ENCODE measurements at regions of chr20 and their contacts with region 1.

Region 1: GRCh38 chr20:32638848-32639247 is 34.9 kb downstream of the C20orf203 start:
- DNase-seq: peak; percentile 91
- H3K4me3 ChIP-seq: no peak overlapping the region
- H3K27ac ChIP-seq: no peak overlapping the region
- H3K4me1 ChIP-seq: peaks cover 13% of the 10 kb centered on the region
- H3K27me3 ChIP-seq: no peaks in the 10 kb centered on the region
- CTCF ChIP-seq: peak; percentile 39 to 73

Region 2: DNA sequence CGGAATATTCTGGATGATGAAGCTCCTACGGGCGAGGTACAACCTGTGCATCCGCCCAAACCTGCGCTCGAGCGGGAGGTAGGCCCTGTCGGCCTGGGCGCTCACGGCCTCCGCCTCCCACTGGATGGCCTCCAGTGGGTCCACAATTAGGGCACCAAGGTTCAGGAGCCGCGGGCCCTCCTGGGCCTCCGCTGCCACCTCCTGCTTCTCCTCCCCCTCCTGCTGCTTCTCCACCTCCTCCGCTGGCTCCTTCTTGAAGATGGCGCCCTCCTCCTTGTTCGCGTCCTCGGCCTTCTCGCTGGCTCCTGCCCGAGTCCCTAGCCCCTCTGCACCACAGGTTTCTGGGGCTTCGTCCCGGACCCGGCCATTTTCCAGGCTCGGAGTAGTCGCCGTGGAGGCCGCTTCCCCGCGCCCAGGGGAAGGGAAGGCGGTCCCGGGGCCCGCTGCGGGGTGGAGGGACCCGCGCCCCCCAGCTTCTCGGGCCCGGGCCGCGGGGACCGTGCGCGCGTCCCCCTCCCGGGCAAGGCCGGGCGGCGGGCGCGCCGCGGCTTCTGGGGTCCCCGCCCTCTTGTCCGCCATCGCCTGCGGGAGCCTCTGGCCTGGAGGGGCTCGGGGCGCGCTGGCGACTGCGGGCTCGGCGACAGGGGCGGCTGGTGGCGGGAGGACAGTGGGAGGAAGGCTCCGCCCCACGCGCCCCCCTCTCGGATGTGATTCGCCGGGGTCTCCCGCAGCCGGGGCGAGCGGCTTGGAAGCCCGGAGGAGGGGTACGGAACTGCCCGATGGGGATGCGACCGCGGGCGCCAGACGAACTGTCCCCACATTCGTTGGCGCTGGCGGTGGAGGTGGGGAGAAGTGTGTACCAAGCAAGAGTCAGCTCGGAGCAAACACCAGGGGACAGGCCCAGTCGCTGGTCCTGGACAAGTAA is 448.9 kb before region 1 on chr20:
- CTCF ChIA-PET with region 1: no interaction called
- dilution Hi-C with region 1: no loop called
- in situ Hi-C with region 1: no loop called
- intact Hi-C with region 1: no loop called
- DNase-seq: no peak
- H3K4me3 ChIP-seq: peak overlapping the region; percentile 21 to 48 (median 33)
- H3K27ac ChIP-seq: no peak overlapping the region
- H3K4me1 ChIP-seq: peaks cover 12% of the 10 kb centered on the region
- H3K27me3 ChIP-seq: no peaks in the 10 kb centered on the region
- CTCF ChIP-seq: no peak

Region 3: DNA sequence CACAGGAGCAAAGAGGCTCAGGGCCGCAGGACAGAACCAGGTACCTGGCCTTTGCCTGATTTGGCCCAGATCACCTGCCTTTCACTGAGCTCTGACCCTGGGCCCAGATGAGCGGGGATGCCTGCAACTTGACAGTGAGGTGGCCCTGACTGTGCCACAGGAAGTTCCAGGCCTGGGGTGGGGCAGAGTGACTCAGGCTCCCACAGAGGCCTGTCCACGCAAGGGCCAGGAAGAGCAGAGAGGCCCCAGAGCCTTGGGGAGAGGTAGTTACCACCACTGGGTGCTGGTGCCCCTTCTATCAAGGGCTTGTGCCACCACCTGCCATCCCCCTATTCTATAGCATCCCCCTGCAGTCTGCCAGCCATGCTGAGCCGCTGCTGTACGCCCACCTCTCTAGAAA is 49.6 kb before region 1 on chr20:
- CTCF ChIA-PET with region 1: interaction called, 5 read pairs
- dilution Hi-C with region 1: no loop called
- in situ Hi-C with region 1: no loop called
- intact Hi-C with region 1: loop called (anchors 2 kb)
- DNase-seq: peak; percentile 57
- H3K4me3 ChIP-seq: no peak overlapping the region
- H3K27ac ChIP-seq: no peak overlapping the region
- H3K4me1 ChIP-seq: peaks cover 16% of the 10 kb centered on the region
- H3K27me3 ChIP-seq: no peaks in the 10 kb centered on the region
- CTCF ChIP-seq: no peak

Region 4: GRCh38 chr20:32605167-32605656 is 33.6 kb before region 1 on chr20:
- CTCF ChIA-PET with region 1: no interaction called
- dilution Hi-C with region 1: no loop called
- in situ Hi-C with region 1: no loop called
- intact Hi-C with region 1: no loop called
- DNase-seq: no peak
- H3K4me3 ChIP-seq: no peak overlapping the region
- H3K27ac ChIP-seq: no peak overlapping the region
- H3K4me1 ChIP-seq: peaks cover 4% of the 10 kb centered on the region
- H3K27me3 ChIP-seq: no peaks in the 10 kb centered on the region
- CTCF ChIP-seq: no peak